CD4-positive, alpha-beta memory T cell (primary cell): ENCODE measurements at regions of chr19 and their contacts with region 1.

Region 1: GRCh38 chr19:48321622-48322591 is 3.4 kb upstream of the EMP3 start:
- DNase-seq: peak; percentile 99 to 100 (median 100)
- H3K4me3 ChIP-seq: peak overlapping the region; percentile 83 to 87
- H3K4me3 Mint-ChIP-seq: peak overlapping the region; percentile 91 to 95 (median 92)
- H3K27ac ChIP-seq: peak overlapping the region; percentile 100
- H3K27ac Mint-ChIP-seq: peak overlapping the region; percentile 98 to 100 (median 100)
- H3K4me1 ChIP-seq: peaks cover 55% of the 10 kb centered on the region
- H3K4me1 Mint-ChIP-seq: peaks cover 32 to 71% (median 49%) of the 10 kb centered on the region in 4 donors
- H3K27me3 ChIP-seq: no peaks in the 10 kb centered on the region
- H3K27me3 Mint-ChIP-seq: no peaks in the 10 kb centered on the region

Region 2: DNA sequence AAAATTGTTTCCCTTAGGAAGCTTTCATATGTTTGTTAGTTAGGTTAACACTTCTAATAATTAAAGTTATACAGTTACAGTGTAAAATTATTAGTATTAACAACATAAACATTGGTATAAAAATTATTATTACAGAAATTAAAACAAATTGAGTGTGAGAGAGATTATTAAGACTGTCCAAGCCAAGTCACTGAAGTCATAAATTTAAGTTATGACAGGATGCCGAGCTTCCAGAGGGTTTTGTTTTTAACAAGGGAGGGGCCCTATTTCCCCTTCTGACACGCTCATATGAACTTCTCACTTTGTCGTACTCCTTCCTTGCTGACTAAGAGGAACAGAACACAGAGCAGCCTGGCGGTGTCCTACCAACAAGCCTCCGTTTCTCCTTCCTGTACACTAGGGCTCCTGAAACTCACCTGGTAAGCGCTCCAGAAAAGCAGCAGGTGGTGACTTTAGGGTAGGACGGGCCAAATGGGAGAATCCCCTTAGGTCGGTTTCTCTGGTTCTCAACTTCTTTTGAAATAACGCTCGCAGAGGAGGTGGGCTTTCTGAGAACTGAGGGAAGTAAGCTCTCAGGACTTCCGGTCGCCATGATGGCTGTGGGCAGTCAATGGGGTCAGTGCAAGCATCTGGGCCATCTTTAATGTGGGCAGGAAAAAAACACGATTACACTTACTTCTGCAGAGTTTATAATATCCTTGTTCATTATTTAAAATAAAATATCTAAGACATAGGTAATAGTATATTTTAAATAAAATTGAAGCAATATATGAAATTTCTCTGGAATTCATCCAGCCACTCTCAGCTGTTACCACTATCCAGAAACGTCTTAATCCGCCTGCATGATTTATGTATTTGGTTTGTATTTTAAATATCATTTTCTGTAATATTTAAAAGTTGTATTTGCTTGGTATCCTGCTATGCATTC is 66.3 kb before region 1 on chr19 and contains the start of gene CARD8:
- CTCF ChIA-PET with region 1: no interaction called
- POLR2A ChIA-PET with region 1: interaction called, 9 read pairs
- intact Hi-C with region 1: loop called (anchors 5 kb)
- DNase-seq: peak; percentile 83 to 92 (median 87)
- H3K4me3 ChIP-seq: peak within 1 kb of the TSS; percentile 77 to 86
- H3K4me3 Mint-ChIP-seq: peak within 1 kb of the TSS; percentile 92 to 99 (median 99)
- H3K27ac ChIP-seq: peak within 1 kb of the TSS; percentile 90
- H3K27ac Mint-ChIP-seq: peak within 1 kb of the TSS; percentile 93 to 100 (median 98)
- H3K4me1 ChIP-seq: peaks cover 75% of the 10 kb centered on the region
- H3K4me1 Mint-ChIP-seq: peaks cover 47 to 83% (median 61%) of the 10 kb centered on the region in 4 donors
- H3K27me3 ChIP-seq: no peaks in the 10 kb centered on the region
- H3K27me3 Mint-ChIP-seq: no peaks in the 10 kb centered on the region
- total RNA-seq, gene CARD8: 310 to 316 TPM

Region 3: DNA sequence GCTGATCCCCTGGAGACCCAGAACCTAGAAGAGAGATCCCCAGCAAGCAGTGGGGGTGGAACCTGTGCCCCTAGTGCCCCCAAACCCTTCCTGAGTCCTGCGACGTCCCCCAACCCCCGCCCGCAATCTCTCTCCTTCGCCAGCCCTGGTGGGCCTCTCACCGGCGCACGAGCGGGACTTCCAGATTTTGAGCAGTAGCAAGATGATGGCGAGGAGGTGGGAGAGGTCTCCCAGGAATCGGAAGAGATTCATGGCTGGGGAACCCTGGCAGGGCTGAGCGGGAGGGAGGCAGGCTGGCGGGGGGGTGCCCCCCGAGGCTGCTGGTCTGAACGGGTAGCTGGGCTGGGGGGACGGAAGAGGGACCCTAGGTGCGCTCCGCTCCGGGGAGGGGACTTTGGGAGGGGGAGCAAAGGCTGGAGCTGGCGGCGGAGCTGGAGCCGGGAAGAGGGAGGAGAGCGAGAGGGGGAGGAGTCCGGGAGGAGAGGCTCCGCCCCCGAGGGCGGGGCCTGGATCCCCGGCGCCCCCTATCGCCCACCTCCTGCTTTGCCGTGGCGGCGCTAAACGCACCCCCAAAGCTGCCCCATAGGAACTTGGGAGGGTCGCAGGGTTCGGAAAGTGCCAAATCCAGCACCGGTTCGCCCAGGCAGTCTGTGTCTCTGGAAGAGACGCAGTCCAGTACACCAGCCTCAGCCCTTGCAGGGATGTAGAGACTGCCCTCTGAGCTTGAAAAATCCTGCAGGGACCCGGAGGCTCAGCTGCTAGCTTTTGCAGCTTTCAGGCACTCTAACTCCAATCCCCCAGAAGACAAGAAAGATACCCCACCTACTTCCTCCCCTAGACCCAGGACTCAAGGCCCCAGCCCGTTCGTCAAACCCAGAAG is 69.4 kb after region 1 on chr19 and contains the start of gene KDELR1:
- CTCF ChIA-PET with region 1: interaction called, 10 read pairs
- POLR2A ChIA-PET with region 1: interaction called, 10 read pairs
- intact Hi-C with region 1: loop called (anchors 1 kb)
- DNase-seq: peak; percentile 59 to 79 (median 66)
- H3K4me3 ChIP-seq: peak within 1 kb of the TSS; percentile 63 to 89
- H3K4me3 Mint-ChIP-seq: peak within 1 kb of the TSS; percentile 91 to 95 (median 94)
- H3K27ac ChIP-seq: peak within 1 kb of the TSS; percentile 93
- H3K27ac Mint-ChIP-seq: peak within 1 kb of the TSS; percentile 89 to 98 (median 95)
- H3K4me1 ChIP-seq: peaks cover 41% of the 10 kb centered on the region
- H3K4me1 Mint-ChIP-seq: peaks cover 15 to 49% (median 33%) of the 10 kb centered on the region in 4 donors
- H3K27me3 ChIP-seq: peaks cover 19% of the 10 kb centered on the region
- H3K27me3 Mint-ChIP-seq: peaks cover 6 to 19% of the 10 kb centered on the region in 2 donors
- total RNA-seq, gene KDELR1: 58.8 to 63.2 TPM

Region 4: DNA sequence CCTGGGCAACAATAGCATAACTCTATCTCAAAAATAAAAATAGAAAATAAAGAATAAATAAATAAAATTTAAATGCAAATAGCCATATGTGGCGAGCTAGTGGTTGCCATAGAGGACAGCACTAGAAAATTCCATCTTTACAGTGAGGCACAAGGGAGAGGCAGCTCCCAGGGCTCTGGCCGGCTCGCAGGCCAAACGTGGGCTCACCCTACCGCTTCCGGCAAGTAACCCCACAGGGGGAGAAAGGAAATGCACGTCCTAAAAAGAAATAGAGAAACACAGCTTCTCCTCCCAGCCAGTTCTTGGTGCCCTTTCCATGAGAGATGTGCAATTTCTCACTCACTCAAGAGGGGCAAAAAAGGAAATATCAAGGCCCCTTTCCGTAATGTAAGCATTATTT is 111.4 kb after region 1 on chr19:
- CTCF ChIA-PET with region 1: no interaction called
- POLR2A ChIA-PET with region 1: no interaction called
- intact Hi-C with region 1: no loop called
- DNase-seq: no peak
- H3K4me3 ChIP-seq: no peak overlapping the region
- H3K4me3 Mint-ChIP-seq: no peak overlapping the region
- H3K27ac ChIP-seq: no peak overlapping the region
- H3K27ac Mint-ChIP-seq: no peak overlapping the region
- H3K4me1 ChIP-seq: no peaks in the 10 kb centered on the region
- H3K4me1 Mint-ChIP-seq: no peaks in the 10 kb centered on the region
- H3K27me3 ChIP-seq: no peaks in the 10 kb centered on the region
- H3K27me3 Mint-ChIP-seq: peaks cover 16 to 17% of the 10 kb centered on the region in 2 donors

Region 5: GRCh38 chr19:48588670-48589399 is 266.9 kb after region 1 on chr19:
- CTCF ChIA-PET with region 1: interaction called, 3 read pairs
- POLR2A ChIA-PET with region 1: no interaction called
- intact Hi-C with region 1: loop called (anchors 2 kb)
- DNase-seq: peak; percentile 77 to 82 (median 81)
- H3K4me3 ChIP-seq: peak overlapping the region in 1 of 2 donors; percentile 49
- H3K4me3 Mint-ChIP-seq: peak overlapping the region; percentile 53 to 91 (median 80)
- H3K27ac ChIP-seq: no peak overlapping the region
- H3K27ac Mint-ChIP-seq: peak overlapping the region; percentile 49 to 84 (median 75)
- H3K4me1 ChIP-seq: peaks cover 17% of the 10 kb centered on the region
- H3K4me1 Mint-ChIP-seq: peaks cover 13 to 33% (median 21%) of the 10 kb centered on the region in 4 donors
- H3K27me3 ChIP-seq: no peaks in the 10 kb centered on the region
- H3K27me3 Mint-ChIP-seq: no peaks in the 10 kb centered on the region

Region 6: DNA sequence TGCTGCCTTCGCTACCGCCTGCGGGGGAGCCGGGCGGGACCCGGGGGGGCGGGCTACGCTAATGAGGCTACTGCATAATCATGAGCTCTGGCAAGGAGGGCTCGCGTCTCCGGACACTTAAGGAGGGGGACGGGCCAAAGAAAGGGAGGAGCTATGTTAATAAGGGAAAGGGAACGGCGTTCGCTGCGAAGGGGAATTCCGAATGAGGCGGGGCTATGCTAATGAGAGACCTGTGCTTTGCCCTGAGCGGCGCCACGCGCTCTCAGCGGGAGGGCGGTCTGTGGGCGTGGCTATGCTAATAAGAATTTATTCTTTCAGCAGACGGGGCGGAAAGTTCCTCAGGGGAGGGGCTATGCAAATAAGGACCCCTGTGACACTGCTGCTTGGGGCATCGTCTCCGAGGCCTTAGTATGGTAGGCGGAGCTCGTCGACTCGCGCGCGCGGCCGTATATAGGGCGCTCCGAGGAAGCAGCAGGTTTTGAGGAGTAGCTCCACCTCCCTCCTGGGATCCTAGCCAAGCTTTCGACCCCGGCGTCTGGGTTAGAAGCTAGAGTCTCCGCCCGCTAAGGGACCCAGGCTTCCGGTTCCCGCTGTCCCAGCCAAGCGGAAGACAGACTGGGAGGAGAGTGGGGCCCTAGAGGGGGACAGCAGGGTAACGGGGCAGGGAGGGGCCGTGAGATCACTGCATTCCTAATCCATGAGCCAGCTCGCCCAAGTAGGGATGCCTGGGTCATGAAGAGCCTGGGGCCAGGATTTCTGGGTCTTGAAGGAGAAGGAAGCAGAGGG is 1318.4 kb after region 1 on chr19 and contains the start of gene RRAS:
- CTCF ChIA-PET with region 1: no interaction called
- POLR2A ChIA-PET with region 1: no interaction called
- intact Hi-C with region 1: loop called (anchors 5 kb)
- DNase-seq: peak; percentile 99 to 100 (median 100)
- H3K4me3 ChIP-seq: peak within 1 kb of the TSS; percentile 42 to 73
- H3K4me3 Mint-ChIP-seq: peak within 1 kb of the TSS; percentile 89 to 95 (median 92)
- H3K27ac ChIP-seq: peak within 1 kb of the TSS; percentile 97
- H3K27ac Mint-ChIP-seq: peak within 1 kb of the TSS; percentile 96 to 100 (median 99)
- H3K4me1 ChIP-seq: peaks cover 63% of the 10 kb centered on the region
- H3K4me1 Mint-ChIP-seq: peaks cover 44 to 73% (median 56%) of the 10 kb centered on the region in 4 donors
- H3K27me3 ChIP-seq: no peaks in the 10 kb centered on the region
- H3K27me3 Mint-ChIP-seq: no peaks in the 10 kb centered on the region
- total RNA-seq, gene RRAS: 12.0 to 13.4 TPM